MCF 10A (cell line): ENCODE measurements at regions of chr2 and their contacts with region 1.

Region 1: GRCh38 chr2:171160119-171160955 is at the start of gene TLK1:
- DNase-seq: peak; percentile 64
- H3K4me3 Mint-ChIP-seq: peak within 1 kb of the TSS; percentile 95
- H3K27ac Mint-ChIP-seq: peak within 1 kb of the TSS; percentile 91
- H3K4me1 Mint-ChIP-seq: peaks cover 22% of the 10 kb centered on the region
- H3K27me3 Mint-ChIP-seq: no peaks in the 10 kb centered on the region
- CTCF ChIP-seq: no peak
- total RNA-seq, gene TLK1: 59.2 and 60.6 TPM in 2 replicates

Region 2: DNA sequence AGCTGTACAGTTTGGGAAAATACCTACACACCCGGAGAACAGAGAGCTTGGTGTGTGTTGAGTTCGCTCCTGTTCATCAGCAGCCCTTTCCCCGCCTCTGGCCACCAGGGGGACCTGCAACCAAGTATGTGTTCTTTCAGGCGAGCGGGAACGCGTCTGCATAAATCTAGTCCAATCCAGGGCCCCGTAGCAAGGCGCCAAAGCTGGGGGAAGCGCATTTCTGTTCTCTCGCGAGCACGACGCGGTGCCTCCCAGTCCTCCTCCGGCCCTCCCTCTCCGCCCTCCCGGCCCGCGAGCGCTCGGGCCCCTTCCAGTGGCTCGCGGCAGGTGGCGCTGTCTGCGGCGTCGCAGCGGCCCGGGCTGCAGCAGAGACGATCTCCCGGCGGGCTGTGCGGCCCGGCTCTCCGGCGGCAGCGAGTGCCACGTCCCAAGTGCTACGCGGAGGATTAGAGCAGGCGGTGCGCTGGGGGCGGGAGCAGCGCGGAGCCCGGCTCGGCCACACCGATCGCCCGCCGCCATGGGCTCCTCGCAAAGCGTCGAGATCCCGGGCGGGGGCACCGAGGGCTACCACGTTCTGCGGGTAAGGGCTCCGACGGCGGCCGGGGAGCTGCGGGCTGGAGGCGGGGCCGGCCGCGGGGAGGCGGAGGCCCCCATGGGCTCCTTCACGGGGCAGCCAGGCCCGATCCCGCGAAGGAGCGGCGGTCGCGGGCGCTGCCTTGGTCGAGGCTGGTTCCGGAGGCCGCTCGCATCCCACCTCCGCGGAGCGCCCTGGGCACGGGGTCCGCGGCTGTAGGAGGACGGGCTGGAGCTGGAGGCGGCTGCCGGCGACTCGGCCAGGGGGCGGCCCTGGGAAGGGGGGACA is 231.3 kb before region 1 on chr2 and contains the start of gene GORASP2:
- CTCF ChIA-PET with region 1: interaction called, 5 read pairs
- POLR2A ChIA-PET with region 1: interaction called, 17 read pairs
- intact Hi-C with region 1: loop called (anchors 1 kb)
- DNase-seq: peak; percentile 100
- H3K4me3 Mint-ChIP-seq: peak within 1 kb of the TSS; percentile 86
- H3K27ac Mint-ChIP-seq: peak within 1 kb of the TSS; percentile 99
- H3K4me1 Mint-ChIP-seq: peaks cover 29% of the 10 kb centered on the region
- H3K27me3 Mint-ChIP-seq: no peaks in the 10 kb centered on the region
- CTCF ChIP-seq: peak; percentile 85
- total RNA-seq, gene GORASP2: 140 and 168 TPM in 2 replicates

Region 3: GRCh38 chr2:170985407-170985806 is 174.9 kb before region 1 on chr2:
- CTCF ChIA-PET with region 1: interaction called, 3 read pairs
- POLR2A ChIA-PET with region 1: no interaction called
- intact Hi-C with region 1: loop called (anchors 5 kb)
- DNase-seq: no peak
- H3K4me3 Mint-ChIP-seq: no peak overlapping the region
- H3K27ac Mint-ChIP-seq: no peak overlapping the region
- H3K4me1 Mint-ChIP-seq: no peaks in the 10 kb centered on the region
- H3K27me3 Mint-ChIP-seq: peaks cover 14% of the 10 kb centered on the region
- CTCF ChIP-seq: no peak

Region 4: DNA sequence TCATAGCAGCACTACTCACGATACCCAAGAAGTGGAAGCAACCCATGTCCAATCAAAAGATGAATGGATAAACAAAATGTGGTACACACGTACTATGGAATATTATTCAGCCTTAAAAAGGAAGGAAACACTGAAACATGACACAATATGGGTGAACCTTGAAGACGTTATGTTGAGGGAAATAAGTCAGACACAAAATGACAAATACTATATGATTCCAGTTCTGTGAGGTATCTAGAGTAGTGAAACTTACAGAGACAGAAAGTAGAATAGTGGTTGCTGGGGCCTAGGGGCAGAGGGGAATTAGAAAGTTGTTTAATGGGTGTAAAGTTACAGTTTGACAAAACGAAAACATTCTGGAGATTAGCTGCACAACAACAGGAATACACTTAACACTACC is 24.3 kb before region 1 on chr2:
- CTCF ChIA-PET with region 1: interaction called, 5 read pairs
- POLR2A ChIA-PET with region 1: interaction called, 15 read pairs
- intact Hi-C with region 1: no loop called
- DNase-seq: no peak
- H3K4me3 Mint-ChIP-seq: no peak overlapping the region
- H3K27ac Mint-ChIP-seq: no peak overlapping the region
- H3K4me1 Mint-ChIP-seq: peaks cover 9% of the 10 kb centered on the region
- H3K27me3 Mint-ChIP-seq: no peaks in the 10 kb centered on the region
- CTCF ChIP-seq: no peak

Region 5: DNA sequence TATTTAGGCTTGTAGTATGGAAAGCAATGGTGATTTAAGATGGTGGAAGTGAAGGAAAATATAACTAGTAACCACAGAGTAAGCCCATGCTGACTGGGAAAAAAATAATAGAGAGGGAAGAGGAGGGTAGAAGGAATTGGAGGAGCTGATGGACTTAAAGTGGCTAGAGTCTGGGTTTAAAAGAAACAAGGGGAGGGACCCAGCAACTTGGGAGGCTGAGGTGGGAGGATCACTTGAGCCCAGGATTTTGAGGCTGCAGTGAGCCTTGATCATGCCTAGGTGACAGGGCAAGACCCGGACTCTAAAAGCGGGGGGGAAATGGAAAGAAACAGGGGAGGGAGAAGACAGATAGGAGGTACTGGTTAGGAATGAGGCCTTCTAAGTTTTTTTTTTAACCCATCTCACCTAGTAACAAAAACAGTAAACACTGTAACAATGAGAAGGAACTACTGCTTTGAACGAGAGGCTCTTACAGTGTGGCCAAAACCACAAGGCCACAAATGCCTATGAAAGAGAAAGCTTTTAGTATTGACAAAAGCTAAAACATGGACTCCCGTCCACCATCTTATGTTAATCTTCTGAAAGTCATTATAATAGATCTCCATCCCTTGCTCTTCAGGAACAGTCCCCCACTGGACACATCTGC is 246.8 kb after region 1 on chr2:
- CTCF ChIA-PET with region 1: interaction called, 7 read pairs
- POLR2A ChIA-PET with region 1: interaction called, 53 read pairs
- intact Hi-C with region 1: no loop called
- DNase-seq: no peak
- H3K4me3 Mint-ChIP-seq: no peak overlapping the region
- H3K27ac Mint-ChIP-seq: no peak overlapping the region
- H3K4me1 Mint-ChIP-seq: peaks cover 59% of the 10 kb centered on the region
- H3K27me3 Mint-ChIP-seq: no peaks in the 10 kb centered on the region
- CTCF ChIP-seq: no peak

Region 6: DNA sequence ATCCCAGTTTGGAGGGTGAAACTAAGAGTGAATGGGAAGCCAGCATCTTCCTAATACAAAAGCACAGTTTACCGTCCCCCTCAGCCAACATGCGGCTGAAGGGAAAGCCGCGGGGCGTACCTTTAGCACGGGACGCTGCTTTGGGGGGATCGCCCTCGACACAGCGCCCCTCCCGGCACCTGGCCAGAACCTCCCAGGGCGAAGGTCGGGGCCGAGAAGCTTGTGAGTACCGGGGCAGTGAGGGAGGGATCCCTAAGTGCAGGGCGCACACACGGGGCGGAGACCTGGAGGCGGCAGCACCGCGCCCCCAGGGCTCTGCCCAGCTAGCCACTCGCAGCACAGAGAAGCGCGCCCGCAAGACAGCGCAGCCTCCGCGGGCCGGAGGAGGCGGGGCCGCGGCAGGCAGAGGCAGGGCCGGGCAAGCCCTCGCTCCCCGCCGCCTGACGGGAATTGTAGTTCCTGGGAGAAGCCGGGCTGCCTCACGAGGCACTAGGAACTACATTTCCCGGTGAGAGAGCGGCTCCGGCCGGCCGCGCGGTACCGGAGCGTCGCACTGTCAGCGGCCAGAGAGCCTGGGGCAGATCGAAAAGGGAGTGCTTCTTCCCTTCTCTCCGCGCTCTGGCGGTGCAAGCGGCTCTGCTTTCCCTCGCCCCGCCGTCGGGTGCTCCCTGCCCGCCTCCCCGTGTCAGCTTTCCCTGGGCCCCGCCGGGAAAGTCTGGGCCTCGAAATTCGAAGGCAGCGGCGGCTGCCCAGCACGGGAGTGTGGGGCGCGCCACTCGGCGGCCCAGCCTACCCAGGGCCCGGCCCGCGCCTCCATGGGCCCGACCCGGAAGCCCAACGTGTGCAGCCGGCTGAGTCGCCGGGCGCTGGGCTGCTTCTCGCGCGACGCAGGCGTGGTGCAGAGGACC is 273.7 kb after region 1 on chr2 and contains the starts of genes DCAF17 and METTL8:
- CTCF ChIA-PET with region 1: interaction called, 3 read pairs
- POLR2A ChIA-PET with region 1: interaction called, 61 read pairs
- intact Hi-C with region 1: loop called (anchors 5 kb)
- DNase-seq: peak; percentile 97
- H3K4me3 Mint-ChIP-seq: peak within 1 kb of the TSS; percentile 98
- H3K27ac Mint-ChIP-seq: peak within 1 kb of the TSS; percentile 93
- H3K4me1 Mint-ChIP-seq: peaks cover 17% of the 10 kb centered on the region
- H3K27me3 Mint-ChIP-seq: no peaks in the 10 kb centered on the region
- CTCF ChIP-seq: peak; percentile 10
- total RNA-seq, gene DCAF17: 20.8 and 21.3 TPM in 2 replicates
- total RNA-seq, gene METTL8: 28.4 and 55.1 TPM in 2 replicates